Transverse colon (tissue), 4 donors: ENCODE measurements at regions of chr2 and their contacts with region 1.

Region 1: DNA sequence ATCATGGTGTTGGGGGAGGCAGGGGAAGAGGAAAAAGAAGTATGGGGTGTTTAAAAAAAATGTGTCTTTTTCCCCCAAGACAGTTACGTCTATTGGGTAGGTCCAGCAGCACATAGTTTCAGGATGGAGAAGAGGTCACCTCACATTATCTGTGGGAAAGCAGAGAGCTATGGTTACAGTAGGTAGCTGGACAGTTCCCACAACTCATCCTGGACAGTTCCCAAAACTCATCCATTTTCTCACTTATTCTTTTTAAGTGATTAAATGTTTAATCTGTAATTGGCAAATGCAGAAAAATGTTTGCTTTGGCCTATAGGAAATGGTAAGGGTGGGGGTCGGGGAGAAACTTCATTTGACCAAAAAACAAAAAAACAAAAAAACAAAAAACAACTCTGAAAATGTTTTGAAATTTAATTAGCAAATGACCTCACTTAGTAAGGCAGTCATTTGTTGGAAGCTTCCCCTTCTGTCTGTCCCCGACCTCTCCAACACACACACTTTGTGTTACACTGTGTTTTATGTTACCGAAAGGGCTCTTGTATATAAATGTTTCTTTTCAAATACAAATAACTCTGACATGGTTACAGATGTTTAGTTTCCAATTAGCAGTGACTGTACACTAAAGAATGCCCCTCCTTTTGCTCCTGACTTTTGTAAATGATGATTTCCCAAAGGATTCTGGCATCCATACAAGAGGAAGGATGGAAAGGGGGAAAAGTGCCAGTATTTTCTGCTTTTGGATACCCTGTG is 173.3 kb upstream of the ZFP36L2 start:
- DNase-seq: no peak
- H3K4me3 ChIP-seq: no peak overlapping the region
- H3K27ac ChIP-seq: peak overlapping the region; percentile 63 to 80 (median 72)
- H3K4me1 ChIP-seq: peaks cover 0 to 36% (median 0%) of the 10 kb centered on the region in 4 donors
- H3K27me3 ChIP-seq: no peaks in the 10 kb centered on the region
- CTCF ChIP-seq: no peak
- EP300 ChIP-seq: peak; percentile 77
- POLR2A ChIP-seq: no peak

Region 2: DNA sequence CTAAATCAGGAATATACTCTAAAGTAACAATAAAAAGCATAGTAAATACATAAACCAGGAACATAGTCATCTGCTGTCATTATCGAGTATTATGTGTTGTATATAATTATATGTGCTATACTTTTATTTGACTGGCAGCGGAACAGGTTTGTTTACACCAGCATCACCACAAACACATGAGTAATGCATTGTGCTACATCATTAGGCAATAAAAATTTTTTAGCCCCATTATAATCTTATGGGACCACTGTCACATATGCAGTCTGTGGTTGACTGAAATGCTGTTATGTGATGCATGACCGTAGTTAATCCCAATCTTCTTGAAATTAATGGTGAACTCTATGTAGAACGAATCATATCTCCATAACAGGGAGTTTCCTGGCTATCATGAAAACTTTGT is 36.6 kb before region 1 on chr2:
- in situ Hi-C with region 1: no loop called
- intact Hi-C with region 1: loop called (anchors 1 kb)
- DNase-seq: no peak
- H3K4me3 ChIP-seq: no peak overlapping the region
- H3K27ac ChIP-seq: no peak overlapping the region
- H3K4me1 ChIP-seq: peaks cover 4 to 11% (median 7%) of the 10 kb centered on the region in 4 donors
- H3K27me3 ChIP-seq: no peaks in the 10 kb centered on the region
- CTCF ChIP-seq: no peak
- EP300 ChIP-seq: no peak
- POLR2A ChIP-seq: no peak

Region 3: DNA sequence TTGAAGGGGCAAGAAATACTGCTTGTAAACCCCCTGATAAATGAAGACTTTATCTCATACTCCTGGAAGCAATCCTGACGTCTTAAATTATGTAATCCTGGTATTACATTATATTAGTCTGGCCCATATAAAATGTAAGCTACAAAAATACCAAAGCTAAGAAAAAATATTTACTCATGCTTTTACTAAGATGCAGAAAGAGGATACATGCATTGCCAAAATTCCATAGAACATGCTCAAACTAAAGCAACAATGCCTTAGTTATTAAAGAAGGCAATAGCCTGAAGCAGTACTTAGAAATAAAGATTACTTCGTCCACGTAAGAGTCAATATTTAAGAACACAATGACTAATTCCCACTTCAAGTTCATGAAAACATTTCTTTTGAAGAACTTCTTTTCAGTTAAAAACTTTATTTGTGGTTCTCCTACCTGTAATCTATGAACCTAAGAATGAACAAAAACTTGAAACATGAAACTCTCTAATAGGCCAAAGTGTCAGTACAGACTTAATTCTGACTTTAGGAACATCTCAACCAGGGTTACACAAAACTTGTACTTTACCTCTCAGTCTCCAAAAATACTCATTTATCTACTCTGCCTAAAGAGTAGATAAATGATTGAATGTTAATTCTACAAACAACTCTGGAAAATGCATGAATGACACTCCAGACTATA is 78.9 kb after region 1 on chr2:
- in situ Hi-C with region 1: no loop called
- intact Hi-C with region 1: loop called (anchors 10 kb)
- DNase-seq: no peak
- H3K4me3 ChIP-seq: no peak overlapping the region
- H3K27ac ChIP-seq: no peak overlapping the region
- H3K4me1 ChIP-seq: peaks cover 7 to 22% (median 9%) of the 10 kb centered on the region in 4 donors
- H3K27me3 ChIP-seq: no peaks in the 10 kb centered on the region
- CTCF ChIP-seq: no peak
- EP300 ChIP-seq: no peak
- POLR2A ChIP-seq: no peak